ENCODE measurements at regions of chr3 and their contacts with region 1.

Region 1: DNA sequence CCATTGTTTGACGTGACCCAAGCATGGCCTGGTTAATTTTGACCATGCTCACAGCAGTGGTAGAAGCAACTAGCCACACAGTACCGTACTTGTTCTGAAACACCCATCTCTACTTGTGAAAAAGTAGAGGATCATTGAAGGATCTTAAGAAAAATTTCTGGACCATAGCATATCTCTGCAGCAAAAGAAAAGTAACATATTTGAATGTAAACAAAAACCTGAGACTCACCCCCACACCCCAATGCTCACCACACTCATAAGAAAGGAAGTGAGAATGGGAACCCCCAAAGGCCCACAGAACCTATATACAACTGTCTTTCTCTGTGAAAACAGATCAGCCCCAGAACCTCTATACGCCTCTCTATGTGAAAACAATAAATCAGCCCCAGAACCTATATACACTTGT is 33.8 kb upstream of the TFRC start:
- DNase-seq: peak; percentile 80
- ATAC-seq: peak; percentile 75
- H3K4me3 ChIP-seq: peak overlapping the region; percentile 37; the same call in 1 of the 2 replicates
- H3K27ac ChIP-seq: peak overlapping the region; percentile 86
- H3K4me1 ChIP-seq: peaks cover 69% of the 10 kb centered on the region
- H3K27me3 ChIP-seq: no peaks in the 10 kb centered on the region
- CTCF ChIP-seq: no peak
- EP300 ChIP-seq: peak; percentile 72 to 82; a peak in 3 of 4 replicates
- POLR2A ChIP-seq: no peak
- RAD21 ChIP-seq: 0 out of 2 replicates have a peak, but pooled peaks have one; percentile 19

Region 2: DNA sequence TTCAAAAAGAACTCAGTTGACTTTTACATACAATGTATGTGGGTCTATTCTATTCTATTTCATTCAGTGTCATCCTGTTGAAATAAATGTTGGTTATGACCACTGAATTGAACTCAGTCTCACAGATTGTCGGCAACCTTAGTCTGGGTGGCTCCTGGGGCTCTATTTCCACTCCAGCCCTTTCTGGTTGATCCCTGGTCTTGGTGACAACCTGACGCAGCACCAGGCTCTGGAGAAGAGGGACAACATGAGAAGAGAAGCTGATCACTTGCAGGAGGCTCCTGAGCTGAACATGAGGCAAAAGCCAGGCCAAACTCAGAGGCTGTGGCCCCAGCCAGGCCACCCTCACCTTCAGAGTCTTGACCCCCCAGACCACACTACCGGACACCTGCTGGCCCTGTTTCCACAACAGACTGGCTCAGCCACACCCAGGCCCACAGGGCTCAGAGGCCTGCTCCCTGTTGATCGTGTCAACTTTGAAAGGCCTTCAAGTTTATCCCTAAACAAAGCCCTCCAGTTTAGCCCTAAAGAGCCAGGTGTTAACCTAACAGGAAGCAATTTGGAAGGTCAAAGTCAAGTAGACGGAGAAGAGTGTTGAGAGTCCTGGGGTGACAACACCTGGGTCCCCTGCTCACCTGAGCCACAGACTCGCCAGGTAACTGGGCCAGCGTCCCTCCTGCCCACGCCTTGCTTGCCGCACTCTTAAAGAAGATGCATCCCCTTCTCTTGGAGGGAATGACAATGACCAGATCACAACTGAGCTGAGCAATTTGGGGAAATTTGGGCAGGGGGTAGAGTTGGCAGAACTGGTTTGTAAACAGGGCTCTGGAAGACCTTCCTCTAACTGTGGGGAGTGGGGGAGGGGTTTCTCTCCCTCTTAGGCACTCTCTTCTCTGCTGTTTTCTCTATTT is 410.3 kb before region 1 on chr3:
- CTCF ChIA-PET with region 1: no interaction called
- POLR2A ChIA-PET with region 1: no interaction called
- RAD21 ChIA-PET with region 1: no interaction called
- SMC1A ChIA-PET with region 1: no interaction called
- in situ Hi-C with region 1: no loop called
- intact Hi-C with region 1: no loop called
- DNase-seq: no peak
- ATAC-seq: no peak
- H3K4me3 ChIP-seq: no peak overlapping the region
- H3K27ac ChIP-seq: no peak overlapping the region
- H3K4me1 ChIP-seq: 0 out of 2 replicates have a peak, but pooled peaks cover 4% of the 10 kb centered on the region
- H3K27me3 ChIP-seq: no peaks in the 10 kb centered on the region
- CTCF ChIP-seq: no peak
- EP300 ChIP-seq: no peak
- POLR2A ChIP-seq: no peak
- RAD21 ChIP-seq: no peak

Region 3: GRCh38 chr3:196127295-196128040 is 11.8 kb after region 1 on chr3:
- CTCF ChIA-PET with region 1: interaction called, 13 read pairs
- POLR2A ChIA-PET with region 1: interaction called, 7 read pairs
- RAD21 ChIA-PET with region 1: interaction called, 15 read pairs
- SMC1A ChIA-PET with region 1: interaction called, 22 read pairs
- in situ Hi-C with region 1: no loop called
- intact Hi-C with region 1: no loop called
- DNase-seq: no peak
- ATAC-seq: peak; percentile 80
- H3K4me3 ChIP-seq: no peak overlapping the region
- H3K27ac ChIP-seq: peak overlapping the region; percentile 27
- H3K4me1 ChIP-seq: peaks cover 25% of the 10 kb centered on the region
- H3K27me3 ChIP-seq: no peaks in the 10 kb centered on the region
- CTCF ChIP-seq: no peak
- EP300 ChIP-seq: no peak
- POLR2A ChIP-seq: no peak
- RAD21 ChIP-seq: no peak

Region 4: GRCh38 chr3:196159952-196160804 is 44.5 kb after region 1 on chr3:
- CTCF ChIA-PET with region 1: interaction called, 6 read pairs
- POLR2A ChIA-PET with region 1: interaction called, 16 read pairs
- RAD21 ChIA-PET with region 1: interaction called, 21 read pairs
- SMC1A ChIA-PET with region 1: interaction called, 23 read pairs
- in situ Hi-C with region 1: no loop called
- intact Hi-C with region 1: loop called (anchors 5 kb)
- DNase-seq: peak; percentile 72
- ATAC-seq: peak; percentile 100
- H3K4me3 ChIP-seq: peak overlapping the region; percentile 14; the same call in 1 of the 2 replicates
- H3K27ac ChIP-seq: peak overlapping the region; percentile 66
- H3K4me1 ChIP-seq: peaks cover 12% of the 10 kb centered on the region
- H3K27me3 ChIP-seq: no peaks in the 10 kb centered on the region
- CTCF ChIP-seq: no peak
- EP300 ChIP-seq: 0 out of 4 replicates have a peak, but pooled peaks of 1 of the 2 experiments have one; percentile 10
- POLR2A ChIP-seq: peak; percentile 74
- RAD21 ChIP-seq: no peak

Region 5: DNA sequence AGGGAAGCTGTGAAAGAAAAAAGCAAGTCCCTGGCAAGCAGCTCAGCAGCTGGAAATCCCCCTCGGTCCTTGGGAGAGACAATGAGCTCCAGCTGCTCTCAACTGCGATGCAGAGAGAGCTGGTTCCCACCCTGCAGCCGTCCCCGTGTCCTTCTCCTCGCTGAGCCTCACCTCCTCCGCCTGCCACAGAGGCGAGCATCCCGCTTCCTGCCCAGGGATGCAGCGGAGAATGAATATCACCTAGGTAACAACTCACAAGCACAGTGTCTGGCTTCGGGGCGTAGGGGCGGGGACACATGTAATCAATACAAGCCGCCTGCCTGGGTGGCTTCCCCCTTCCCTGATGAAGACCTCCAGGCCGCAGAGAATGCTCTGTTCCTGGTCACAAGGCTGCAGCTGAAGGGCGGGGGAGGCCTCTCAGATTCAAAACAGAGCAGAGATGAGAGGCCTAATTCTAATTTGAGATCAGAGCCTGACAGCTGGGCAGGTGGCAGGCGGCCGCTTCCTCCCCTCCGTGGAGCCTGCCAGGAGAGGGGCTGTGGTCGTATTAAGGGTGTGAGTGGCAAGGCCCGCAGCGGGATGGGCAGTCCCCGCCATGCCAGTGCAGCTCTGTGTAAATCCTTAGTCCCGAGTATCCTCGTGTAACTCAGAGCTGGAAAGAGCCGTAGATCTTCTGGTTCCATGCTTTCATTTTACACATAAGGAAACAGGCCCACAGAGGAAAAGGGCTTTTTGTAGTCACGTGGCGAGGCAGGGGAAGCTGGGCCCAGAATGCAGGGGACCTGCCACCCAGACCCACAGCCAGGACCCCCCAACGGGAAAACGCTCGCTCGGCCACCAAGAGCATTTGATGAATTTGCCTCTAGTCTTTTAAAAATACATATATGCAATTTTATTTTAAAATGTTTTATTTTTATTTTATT is 71.2 kb after region 1 on chr3:
- CTCF ChIA-PET with region 1: interaction called, 5 read pairs
- POLR2A ChIA-PET with region 1: interaction called, 33 read pairs
- RAD21 ChIA-PET with region 1: interaction called, 57 read pairs
- SMC1A ChIA-PET with region 1: interaction called, 39 read pairs
- in situ Hi-C with region 1: no loop called
- intact Hi-C with region 1: loop called (anchors 1 kb)
- DNase-seq: peak; percentile 64
- ATAC-seq: peak; percentile 67
- H3K4me3 ChIP-seq: peak overlapping the region; percentile 66; the same call in 1 of the 2 replicates
- H3K27ac ChIP-seq: peak overlapping the region; percentile 95
- H3K4me1 ChIP-seq: peaks cover 70% of the 10 kb centered on the region
- H3K27me3 ChIP-seq: no peaks in the 10 kb centered on the region
- CTCF ChIP-seq: no peak
- EP300 ChIP-seq: no peak; a peak in 2 of 4 replicates
- POLR2A ChIP-seq: peak; percentile 74
- RAD21 ChIP-seq: no peak

Region 6: DNA sequence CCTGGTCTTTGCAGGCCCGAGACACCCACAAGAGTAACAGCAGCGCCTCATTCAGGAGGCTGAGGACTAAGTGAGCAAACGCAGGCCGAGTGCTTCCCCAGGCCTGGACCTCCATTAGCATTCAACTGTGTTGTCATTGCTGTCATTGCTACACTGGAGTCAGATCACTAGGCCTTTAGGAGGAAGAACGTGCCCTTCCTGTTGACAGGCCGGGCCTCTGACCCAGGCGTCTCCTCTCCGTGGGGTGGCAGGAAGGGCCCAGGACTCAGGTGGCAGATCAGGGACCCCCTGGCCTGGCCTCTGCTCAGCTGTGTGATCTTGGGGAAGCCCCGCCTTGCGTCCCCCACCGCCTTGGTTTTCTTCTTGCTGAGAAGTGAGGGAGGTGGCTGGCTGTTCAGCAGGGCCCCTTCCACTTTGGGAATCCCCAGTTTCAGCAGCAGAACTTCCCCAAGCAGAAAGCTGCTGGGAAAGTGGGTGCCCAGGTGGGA is 76.4 kb after region 1 on chr3:
- CTCF ChIA-PET with region 1: interaction called, 7 read pairs
- POLR2A ChIA-PET with region 1: interaction called, 24 read pairs
- RAD21 ChIA-PET with region 1: interaction called, 27 read pairs
- SMC1A ChIA-PET with region 1: interaction called, 25 read pairs
- in situ Hi-C with region 1: no loop called
- intact Hi-C with region 1: no loop called
- DNase-seq: peak; percentile 74
- ATAC-seq: peak; percentile 77
- H3K4me3 ChIP-seq: peak overlapping the region; percentile 53; the same call in 1 of the 2 replicates
- H3K27ac ChIP-seq: peak overlapping the region; percentile 83
- H3K4me1 ChIP-seq: peaks cover 55% of the 10 kb centered on the region
- H3K27me3 ChIP-seq: no peaks in the 10 kb centered on the region
- CTCF ChIP-seq: peak in 1 of 3 experiments; percentile 5; a peak in 1 of 6 replicates
- EP300 ChIP-seq: peak; percentile 34 to 53; a peak in 3 of 4 replicates
- POLR2A ChIP-seq: peak; percentile 62
- RAD21 ChIP-seq: peak; percentile 42; the same call in 1 of the 2 replicates

Region 7: DNA sequence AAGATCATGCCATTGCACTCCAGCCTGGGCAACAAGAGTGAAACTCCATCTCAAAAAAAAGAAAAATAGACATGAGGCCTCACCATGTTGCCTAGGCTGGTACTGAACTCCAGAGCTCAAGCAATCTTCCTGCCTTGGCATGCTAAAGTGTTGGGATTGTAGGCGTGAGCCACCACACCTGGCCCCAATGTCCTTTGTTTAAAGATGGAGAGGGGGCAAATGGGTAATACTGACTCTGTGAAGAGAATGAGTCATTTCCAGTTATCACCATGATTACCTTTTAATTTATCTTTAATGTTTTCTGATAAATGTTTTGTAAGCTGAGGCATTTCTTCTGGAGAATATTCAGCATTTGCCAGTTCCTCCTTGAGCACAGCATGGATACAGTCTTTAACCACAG is 200.1 kb after region 1 on chr3:
- CTCF ChIA-PET with region 1: no interaction called
- POLR2A ChIA-PET with region 1: no interaction called
- RAD21 ChIA-PET with region 1: no interaction called
- SMC1A ChIA-PET with region 1: no interaction called
- in situ Hi-C with region 1: no loop called
- intact Hi-C with region 1: no loop called
- DNase-seq: no peak
- ATAC-seq: no peak
- H3K4me3 ChIP-seq: no peak overlapping the region
- H3K27ac ChIP-seq: no peak overlapping the region
- H3K4me1 ChIP-seq: no peaks in the 10 kb centered on the region
- H3K27me3 ChIP-seq: no peaks in the 10 kb centered on the region
- CTCF ChIP-seq: no peak
- EP300 ChIP-seq: no peak
- POLR2A ChIP-seq: no peak
- RAD21 ChIP-seq: no peak